ENCODE measurements at regions of chr1 and their contacts with region 1.

Region 1: DNA sequence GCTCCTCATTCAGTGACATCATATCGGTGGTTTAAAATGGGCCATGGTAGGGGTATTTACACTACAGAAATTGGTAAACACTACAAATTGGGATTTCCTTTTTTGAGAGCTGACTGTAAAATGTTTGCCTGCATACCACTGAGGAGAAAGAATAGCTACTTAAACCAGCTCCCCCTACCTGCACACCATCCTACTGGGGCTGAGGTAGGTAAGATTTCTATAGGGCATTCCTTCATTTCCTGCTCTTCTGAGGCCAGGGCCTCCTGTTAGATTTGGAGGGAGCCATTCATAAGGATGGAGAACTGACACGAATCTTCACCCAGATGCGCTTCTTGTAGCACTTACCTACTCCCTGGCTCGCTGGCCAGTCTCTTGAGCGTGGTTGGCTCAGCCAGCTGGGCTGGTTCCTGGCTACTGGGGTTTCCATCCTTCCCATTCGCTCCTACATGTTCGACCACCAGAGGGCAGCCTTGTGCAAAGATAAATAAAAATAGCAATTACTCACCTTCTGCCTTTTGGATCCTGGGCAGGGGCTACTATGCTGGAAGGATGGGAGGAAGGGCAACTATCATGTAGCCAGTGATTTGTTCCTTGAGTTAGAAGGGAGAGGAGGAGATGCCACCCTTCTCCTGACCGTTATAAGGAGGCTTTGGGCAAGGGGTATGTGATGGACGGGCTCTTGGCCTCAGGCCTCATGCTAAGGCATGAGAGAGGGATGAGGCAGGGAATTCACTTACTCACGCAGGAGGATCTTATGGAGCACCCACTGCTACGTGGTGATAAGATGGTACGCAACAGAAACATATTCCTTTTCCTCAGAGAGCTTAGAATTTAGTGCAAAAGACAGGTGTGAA is 10.7 kb downstream of the OPTC start:
- DNase-seq: peak; percentile 85
- H3K4me3 ChIP-seq: no peak overlapping the region
- H3K27ac ChIP-seq: peak overlapping the region in 3 of 4 donors; percentile 33 to 47 (median 43)
- H3K4me1 ChIP-seq: peaks cover 13 to 25% (median 15%) of the 10 kb centered on the region in 4 donors
- H3K27me3 ChIP-seq: no peaks in the 10 kb centered on the region
- CTCF ChIP-seq: peak; percentile 80 to 84 (median 84)
- EP300 ChIP-seq: no peak
- POLR2A ChIP-seq: no peak

Region 2: DNA sequence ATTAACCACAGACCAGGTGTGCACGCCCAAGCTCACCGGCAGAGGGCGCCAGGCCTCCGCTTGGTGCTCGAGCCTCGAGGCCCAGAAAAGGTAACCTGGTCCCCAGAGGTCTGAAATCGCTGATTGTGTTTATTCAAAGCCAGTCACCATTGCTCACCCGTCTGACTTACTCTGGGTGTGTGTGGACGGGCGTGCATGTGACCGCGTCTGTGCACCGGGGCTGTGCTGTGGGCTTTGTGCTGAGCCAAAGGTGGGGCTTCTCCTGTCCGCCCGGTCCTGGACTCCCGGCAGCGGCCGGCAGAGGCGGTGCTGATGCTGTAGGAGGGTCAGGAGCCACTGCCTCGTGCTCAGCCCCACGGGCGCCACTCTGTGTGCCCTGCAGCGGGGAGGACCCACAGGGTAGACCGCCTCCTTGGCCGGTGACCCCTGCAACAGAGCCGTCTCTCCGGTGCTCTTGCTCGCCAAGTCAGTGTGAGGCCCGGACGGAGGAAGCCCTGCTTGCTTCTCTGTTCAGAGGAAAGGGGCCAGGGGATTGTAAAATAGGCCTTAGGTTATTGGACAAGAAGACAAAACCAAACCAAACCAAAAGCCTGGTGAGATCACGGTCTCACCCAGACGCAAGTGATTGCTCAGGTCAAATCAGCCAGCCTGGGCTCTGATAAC is 231.3 kb before region 1 on chr1:
- in situ Hi-C with region 1: no loop called
- intact Hi-C with region 1: no loop called
- DNase-seq: peak; percentile 92
- H3K4me3 ChIP-seq: peak overlapping the region in 2 of 4 donors; percentile 25 to 30
- H3K27ac ChIP-seq: peak overlapping the region; percentile 83 to 89 (median 87)
- H3K4me1 ChIP-seq: peaks cover 33 to 73% (median 49%) of the 10 kb centered on the region in 4 donors
- H3K27me3 ChIP-seq: no peaks in the 10 kb centered on the region
- CTCF ChIP-seq: peak; percentile 97 to 100 (median 99)
- EP300 ChIP-seq: no peak
- POLR2A ChIP-seq: no peak

Region 3: DNA sequence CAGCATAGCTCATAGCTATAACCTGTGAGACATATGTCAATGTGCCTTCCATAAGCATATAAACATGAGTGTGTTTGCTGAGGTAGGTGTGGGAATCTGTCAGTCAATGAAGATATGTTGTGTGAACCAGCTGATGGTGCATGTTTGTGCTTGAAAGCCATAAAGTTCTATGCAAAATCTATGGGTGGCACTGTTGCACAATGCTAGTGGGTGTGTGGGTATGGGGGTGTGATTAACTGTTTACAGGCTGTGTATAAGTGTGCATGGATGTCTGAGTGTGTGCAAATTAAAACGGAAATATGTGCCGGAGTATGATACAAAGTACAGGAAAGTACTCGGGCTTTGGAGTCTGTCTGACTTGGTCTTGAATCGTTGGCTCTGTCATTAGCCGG is 121.0 kb after region 1 on chr1:
- in situ Hi-C with region 1: no loop called
- intact Hi-C with region 1: loop called (anchors 5 kb)
- DNase-seq: peak; percentile 72
- H3K4me3 ChIP-seq: peak overlapping the region in 1 of 4 donors; percentile 63
- H3K27ac ChIP-seq: peak overlapping the region; percentile 89 to 95 (median 93)
- H3K4me1 ChIP-seq: peaks cover 13 to 56% (median 40%) of the 10 kb centered on the region in 4 donors
- H3K27me3 ChIP-seq: no peaks in the 10 kb centered on the region
- CTCF ChIP-seq: peak in 1 of 5 experiments; percentile 1
- EP300 ChIP-seq: no peak
- POLR2A ChIP-seq: no peak

Region 4: GRCh38 chr1:203769505-203770343 is 265.1 kb after region 1 on chr1:
- in situ Hi-C with region 1: no loop called
- intact Hi-C with region 1: no loop called
- DNase-seq: peak; percentile 91
- H3K4me3 ChIP-seq: peak overlapping the region in 1 of 4 donors; percentile 1
- H3K27ac ChIP-seq: peak overlapping the region; percentile 80 to 88 (median 86)
- H3K4me1 ChIP-seq: peaks cover 11 to 29% (median 18%) of the 10 kb centered on the region in 4 donors
- H3K27me3 ChIP-seq: no peaks in the 10 kb centered on the region
- CTCF ChIP-seq: no peak
- EP300 ChIP-seq: peak; percentile 75
- POLR2A ChIP-seq: peak; percentile 64

Region 5: GRCh38 chr1:203795441-203796235 is 291.0 kb after region 1 on chr1 and contains the starts of genes ZBED6 and ZC3H11A:
- in situ Hi-C with region 1: no loop called
- intact Hi-C with region 1: loop called (anchors 10 kb)
- DNase-seq: peak; percentile 99
- H3K4me3 ChIP-seq: peak within 1 kb of the TSS; percentile 75 to 94 (median 87)
- H3K27ac ChIP-seq: peak within 1 kb of the TSS; percentile 95 to 99 (median 97)
- H3K4me1 ChIP-seq: peaks cover 22 to 46% (median 32%) of the 10 kb centered on the region in 4 donors
- H3K27me3 ChIP-seq: no peaks in the 10 kb centered on the region
- CTCF ChIP-seq: no peak
- EP300 ChIP-seq: no peak
- POLR2A ChIP-seq: peak; percentile 83
- total RNA-seq, gene ZBED6: 12.7 to 29.7 (median 23.6) TPM
- total RNA-seq, gene ZC3H11A: 38.5 to 120 (median 99.0) TPM

Region 6: GRCh38 chr1:203818399-203818798 is 313.8 kb after region 1 on chr1:
- in situ Hi-C with region 1: no loop called
- intact Hi-C with region 1: no loop called
- DNase-seq: peak; percentile 24
- H3K4me3 ChIP-seq: no peak overlapping the region
- H3K27ac ChIP-seq: no peak overlapping the region
- H3K4me1 ChIP-seq: no peaks in the 10 kb centered on the region
- H3K27me3 ChIP-seq: no peaks in the 10 kb centered on the region
- CTCF ChIP-seq: no peak
- EP300 ChIP-seq: no peak
- POLR2A ChIP-seq: no peak

Measured in transverse colon (tissue), 4 donors.